Calu3 (cell line): ENCODE measurements at regions of chr11 and their contacts with region 1.

Region 1: GRCh38 chr11:70191495-70192140 is 11.5 kb upstream of the FADD start:
- DNase-seq: peak; percentile 93
- H3K4me3 Mint-ChIP-seq: no peak overlapping the region
- H3K27ac Mint-ChIP-seq: no peak overlapping the region
- H3K4me1 Mint-ChIP-seq: peaks cover 8% of the 10 kb centered on the region
- H3K27me3 Mint-ChIP-seq: no peaks in the 10 kb centered on the region
- CTCF ChIP-seq: peak; percentile 94

Region 2: DNA sequence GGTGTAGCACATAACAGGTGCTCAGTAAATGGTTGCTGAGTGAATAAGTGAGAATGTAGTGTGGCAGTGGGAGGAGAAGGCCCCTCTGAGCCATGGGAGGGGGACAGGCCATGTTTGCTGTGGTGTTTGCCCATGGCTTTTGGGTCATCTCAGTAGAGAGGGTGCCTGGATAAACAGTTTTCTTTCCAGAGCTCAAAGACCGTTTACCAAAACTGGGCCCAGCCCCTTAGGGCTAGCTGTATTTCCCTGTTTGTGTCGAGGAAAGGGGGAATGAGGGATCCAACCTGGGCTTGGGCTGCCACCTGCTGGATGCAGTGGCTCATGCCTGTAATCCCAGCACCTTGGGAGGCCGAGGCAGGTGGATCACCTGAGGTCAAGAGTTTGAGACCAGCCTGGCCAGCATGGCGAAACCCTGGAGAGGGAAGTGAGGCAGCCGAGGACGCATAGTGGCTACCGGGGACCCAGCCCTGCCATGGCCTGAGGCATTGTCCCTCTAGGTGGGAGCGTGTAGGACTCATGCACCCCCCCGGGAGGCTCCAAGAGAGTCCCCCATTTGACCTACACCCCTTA is 507.8 kb before region 1 on chr11:
- CTCF ChIA-PET with region 1: no interaction called
- intact Hi-C with region 1: loop called (anchors 5 kb)
- DNase-seq: peak; percentile 78
- H3K4me3 Mint-ChIP-seq: no peak overlapping the region
- H3K27ac Mint-ChIP-seq: no peak overlapping the region
- H3K4me1 Mint-ChIP-seq: peaks cover 18% of the 10 kb centered on the region
- H3K27me3 Mint-ChIP-seq: no peaks in the 10 kb centered on the region
- CTCF ChIP-seq: peak; percentile 69

Region 3: DNA sequence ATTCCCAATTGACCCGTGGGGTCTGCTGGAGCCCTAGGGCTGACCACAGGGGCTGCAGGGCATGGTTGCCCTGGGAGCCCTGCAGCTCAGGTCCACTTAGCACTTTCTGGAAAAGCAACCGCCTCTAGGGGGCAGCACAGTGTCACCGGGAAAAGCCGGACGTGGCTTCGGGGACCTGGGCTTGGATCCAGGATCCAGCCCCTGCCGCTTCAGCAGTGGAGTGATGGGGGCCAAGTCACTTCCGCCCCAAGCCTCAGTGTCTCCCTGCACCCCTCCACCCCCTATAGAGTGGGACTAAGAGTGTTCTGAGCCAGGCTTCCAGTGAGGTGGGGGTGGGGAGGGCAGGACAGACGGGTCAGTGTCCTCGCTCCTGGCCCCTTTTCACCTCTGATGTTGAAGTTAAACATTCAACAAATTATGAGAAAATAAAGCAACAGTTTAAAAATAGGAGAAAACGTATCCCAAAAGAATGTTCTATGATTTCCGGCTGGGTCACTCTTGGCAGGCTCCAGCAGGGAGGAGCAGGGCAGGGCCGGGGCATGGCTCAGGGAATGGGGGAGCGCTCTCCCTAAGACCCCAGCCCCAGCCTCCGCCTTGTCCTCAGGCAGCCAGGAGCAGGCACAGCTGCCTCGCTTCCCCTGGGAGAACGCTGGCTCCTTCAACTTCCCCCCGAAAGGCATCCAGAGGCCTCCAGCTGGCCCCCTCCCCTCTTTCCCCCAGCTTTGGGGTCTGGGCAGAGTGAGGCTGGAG is 275.9 kb before region 1 on chr11:
- CTCF ChIA-PET with region 1: interaction called, 6 read pairs
- intact Hi-C with region 1: loop called (anchors 2 kb)
- DNase-seq: peak; percentile 92
- H3K4me3 Mint-ChIP-seq: peak overlapping the region; percentile 1
- H3K27ac Mint-ChIP-seq: peak overlapping the region; percentile 28
- H3K4me1 Mint-ChIP-seq: peaks cover 59% of the 10 kb centered on the region
- H3K27me3 Mint-ChIP-seq: peaks cover 18% of the 10 kb centered on the region
- CTCF ChIP-seq: peak; percentile 91

Region 4: DNA sequence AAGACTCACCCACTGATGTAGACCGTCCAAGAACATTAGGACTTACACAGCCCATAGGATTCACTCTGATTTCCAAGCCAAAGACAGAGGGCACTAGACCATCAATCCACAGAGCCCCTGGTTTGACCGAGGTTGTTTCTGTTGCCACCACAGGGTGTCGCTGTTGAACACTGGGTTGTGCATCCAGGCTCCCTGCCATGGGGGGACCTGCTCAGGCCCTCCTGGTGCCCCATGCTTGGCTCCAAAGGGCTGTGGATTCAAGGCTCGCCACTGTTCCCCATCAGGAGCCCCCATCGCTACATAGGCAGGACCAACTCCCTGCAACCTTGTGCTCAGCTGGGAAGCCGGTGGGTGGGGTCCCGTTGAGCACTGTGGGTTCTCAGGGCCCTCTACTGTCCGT is 241.5 kb before region 1 on chr11:
- CTCF ChIA-PET with region 1: interaction called, 5 read pairs
- intact Hi-C with region 1: loop called (anchors 2 kb)
- DNase-seq: peak; percentile 69
- H3K4me3 Mint-ChIP-seq: no peak overlapping the region
- H3K27ac Mint-ChIP-seq: peak overlapping the region; percentile 98
- H3K4me1 Mint-ChIP-seq: peaks cover 22% of the 10 kb centered on the region
- H3K27me3 Mint-ChIP-seq: no peaks in the 10 kb centered on the region
- CTCF ChIP-seq: peak; percentile 67

Region 5: DNA sequence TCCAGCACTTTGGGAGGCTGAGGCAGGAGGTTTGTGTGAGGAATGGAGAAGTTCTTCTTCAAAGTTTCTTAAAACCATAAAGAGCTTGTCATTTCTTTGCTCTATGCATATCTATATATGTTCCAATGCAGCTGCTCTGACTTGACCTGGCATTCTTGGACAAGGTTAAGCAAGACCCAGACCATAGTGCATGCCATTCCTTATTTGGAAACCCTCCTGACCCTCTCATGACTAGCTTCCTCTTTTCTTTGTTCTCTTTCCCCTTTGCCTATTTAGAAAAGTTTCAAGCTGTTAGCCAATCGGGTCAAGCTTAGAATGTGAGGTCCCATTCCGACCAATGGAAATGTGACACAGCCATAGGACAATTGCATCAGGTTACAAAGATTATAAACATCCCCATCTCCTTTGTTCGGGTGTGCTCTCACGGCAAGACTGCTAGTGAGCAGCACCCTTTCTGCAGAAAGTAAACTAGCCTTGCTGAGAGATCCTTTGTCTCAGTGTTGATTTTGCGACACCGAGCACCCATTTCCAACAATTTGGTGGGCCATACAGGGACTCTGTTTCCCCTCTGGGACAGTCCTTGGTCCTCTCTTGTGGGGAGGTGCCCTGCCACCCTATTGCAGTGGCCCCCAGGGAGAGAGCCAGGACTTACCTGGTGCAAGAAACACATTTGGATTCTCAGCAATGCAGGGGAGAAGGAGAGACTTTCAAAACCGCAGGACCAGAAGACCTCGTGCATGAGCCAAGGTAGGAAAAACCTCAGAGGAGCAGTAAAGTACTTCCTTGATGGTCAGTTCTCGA is 153.4 kb before region 1 on chr11:
- CTCF ChIA-PET with region 1: no interaction called
- intact Hi-C with region 1: no loop called
- DNase-seq: no peak
- H3K4me3 Mint-ChIP-seq: no peak overlapping the region
- H3K27ac Mint-ChIP-seq: no peak overlapping the region
- H3K4me1 Mint-ChIP-seq: peaks cover 10% of the 10 kb centered on the region
- H3K27me3 Mint-ChIP-seq: peaks cover 15% of the 10 kb centered on the region
- CTCF ChIP-seq: no peak

Region 6: DNA sequence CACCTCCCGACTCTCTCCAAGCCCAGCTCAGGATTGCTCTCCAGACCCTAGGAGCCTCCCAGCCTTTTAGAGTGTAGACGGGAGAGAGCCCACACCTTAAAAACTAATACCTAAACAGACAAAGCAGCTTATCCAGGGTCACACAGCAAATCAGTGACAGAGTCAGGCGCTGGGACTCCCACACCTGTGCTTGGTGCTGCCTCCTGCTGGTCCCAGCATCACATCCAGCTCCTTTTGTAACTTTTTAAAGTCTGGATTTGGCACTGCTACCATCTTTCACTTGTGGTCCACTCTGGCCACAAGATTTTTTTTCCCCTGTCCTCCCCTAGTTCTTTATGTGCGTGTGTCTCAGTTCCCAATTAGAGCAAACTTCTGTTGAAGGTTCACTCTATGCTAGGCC is 108.8 kb before region 1 on chr11:
- CTCF ChIA-PET with region 1: no interaction called
- intact Hi-C with region 1: loop called (anchors 10 kb)
- DNase-seq: peak; percentile 28
- H3K4me3 Mint-ChIP-seq: no peak overlapping the region
- H3K27ac Mint-ChIP-seq: no peak overlapping the region
- H3K4me1 Mint-ChIP-seq: peaks cover 19% of the 10 kb centered on the region
- H3K27me3 Mint-ChIP-seq: no peaks in the 10 kb centered on the region
- CTCF ChIP-seq: peak; percentile 37

Region 7: GRCh38 chr11:70135625-70136059 is 56.0 kb before region 1 on chr11:
- CTCF ChIA-PET with region 1: no interaction called
- intact Hi-C with region 1: no loop called
- DNase-seq: no peak
- H3K4me3 Mint-ChIP-seq: no peak overlapping the region
- H3K27ac Mint-ChIP-seq: no peak overlapping the region
- H3K4me1 Mint-ChIP-seq: peaks cover 11% of the 10 kb centered on the region
- H3K27me3 Mint-ChIP-seq: no peaks in the 10 kb centered on the region
- CTCF ChIP-seq: no peak

Region 8: DNA sequence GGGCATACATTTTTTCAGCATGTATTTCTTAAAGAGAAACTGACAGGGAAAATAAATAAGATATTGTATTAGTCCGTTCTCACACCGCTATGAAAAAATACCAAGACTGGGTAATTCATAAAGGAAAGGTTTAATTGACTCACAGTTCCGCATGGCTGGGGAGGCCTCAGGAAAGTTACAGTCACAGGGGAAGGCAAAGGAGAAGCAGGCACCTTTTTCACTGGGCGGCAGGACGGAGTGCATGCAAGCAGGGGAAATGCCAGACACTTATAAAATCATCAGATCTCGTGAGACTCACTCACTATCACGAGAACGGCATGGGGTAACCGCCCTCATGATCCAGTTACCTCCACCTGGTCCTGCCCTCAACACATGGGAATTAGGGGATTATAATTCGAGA is 123.1 kb after region 1 on chr11:
- CTCF ChIA-PET with region 1: no interaction called
- intact Hi-C with region 1: no loop called
- DNase-seq: no peak
- H3K4me3 Mint-ChIP-seq: no peak overlapping the region
- H3K27ac Mint-ChIP-seq: no peak overlapping the region
- H3K4me1 Mint-ChIP-seq: peaks cover 20% of the 10 kb centered on the region
- H3K27me3 Mint-ChIP-seq: no peaks in the 10 kb centered on the region
- CTCF ChIP-seq: no peak

Region 9: GRCh38 chr11:70650075-70650909 is 458.7 kb after region 1 on chr11:
- CTCF ChIA-PET with region 1: no interaction called
- intact Hi-C with region 1: no loop called
- DNase-seq: peak; percentile 76
- H3K4me3 Mint-ChIP-seq: no peak overlapping the region
- H3K27ac Mint-ChIP-seq: no peak overlapping the region
- H3K4me1 Mint-ChIP-seq: no peaks in the 10 kb centered on the region
- H3K27me3 Mint-ChIP-seq: no peaks in the 10 kb centered on the region
- CTCF ChIP-seq: no peak